ENCODE measurements at regions of chr20 and their contacts with region 1.

Region 1: GRCh38 chr20:1965520-1966351 is 28.1 kb downstream of the PDYN start:
- DNase-seq: peak; percentile 74
- ATAC-seq: peak; percentile 92
- H3K4me3 ChIP-seq: no peak overlapping the region
- H3K27ac ChIP-seq: no peak overlapping the region
- H3K4me1 ChIP-seq: no peaks in the 10 kb centered on the region; the same call in 1 of the 2 replicates
- H3K27me3 ChIP-seq: peaks cover 68% of the 10 kb centered on the region
- CTCF ChIP-seq: peak; percentile 99

Region 2: DNA sequence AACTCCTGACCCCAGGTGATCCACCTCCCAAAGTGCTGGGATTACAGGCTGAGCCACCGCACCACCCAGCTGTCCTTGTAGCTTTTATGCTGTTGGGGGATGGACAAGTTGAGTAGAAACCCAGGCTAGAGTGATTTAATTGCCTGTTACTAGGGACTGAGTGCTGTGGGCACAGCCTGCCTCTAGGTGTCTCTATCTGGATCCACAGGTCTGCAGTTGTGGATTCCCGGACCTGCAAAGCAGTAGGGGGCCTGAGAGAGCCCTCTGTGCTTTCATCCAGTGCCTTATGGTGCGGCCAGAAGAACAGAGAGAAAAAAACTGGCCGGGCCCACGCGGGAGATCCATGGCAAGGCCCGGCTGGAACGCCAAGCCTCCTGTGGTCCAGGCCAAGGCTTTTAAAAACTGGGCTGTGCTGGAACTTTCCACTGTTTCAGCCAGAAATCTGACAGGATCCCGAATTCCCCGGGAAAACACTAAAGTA is 65.4 kb before region 1 on chr20:
- CTCF ChIA-PET with region 1: no interaction called
- POLR2A ChIA-PET with region 1: no interaction called
- intact Hi-C with region 1: no loop called
- DNase-seq: peak; percentile 81
- ATAC-seq: peak; percentile 94
- H3K4me3 ChIP-seq: no peak overlapping the region
- H3K27ac ChIP-seq: no peak overlapping the region
- H3K4me1 ChIP-seq: peaks cover 7% of the 10 kb centered on the region; the same call in 1 of the 2 replicates
- H3K27me3 ChIP-seq: no peaks in the 10 kb centered on the region
- CTCF ChIP-seq: peak; percentile 84

Region 3: DNA sequence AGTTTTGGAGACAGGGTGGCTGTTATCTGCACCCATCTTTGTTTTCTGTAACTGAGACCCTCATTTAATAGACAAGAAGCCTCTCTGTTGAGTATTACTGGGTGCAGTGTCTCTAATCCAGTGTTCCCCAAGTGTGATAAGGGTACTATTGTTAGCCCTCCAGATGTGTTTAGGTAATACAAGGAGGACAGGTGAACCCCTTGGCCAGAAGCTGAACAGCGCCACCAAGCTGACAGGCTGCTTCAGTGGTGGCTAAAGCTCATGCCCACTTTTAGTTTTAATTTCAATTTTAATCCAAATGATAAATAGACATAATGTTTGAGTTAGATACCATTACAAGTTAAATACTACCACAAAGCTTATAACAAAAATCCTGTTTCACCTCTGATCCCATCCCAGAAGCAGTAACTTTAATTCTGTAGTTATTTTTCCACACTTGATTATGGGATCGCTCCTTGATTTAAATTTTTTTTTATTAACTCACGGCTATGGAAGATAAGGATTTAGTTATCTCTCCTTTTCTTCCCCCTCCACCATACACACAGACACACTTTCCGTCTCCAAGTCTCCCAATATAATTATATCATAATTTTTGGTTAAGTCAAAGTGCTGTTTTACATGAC is 127.5 kb after region 1 on chr20:
- CTCF ChIA-PET with region 1: interaction called, 3 read pairs
- POLR2A ChIA-PET with region 1: no interaction called
- intact Hi-C with region 1: loop called (anchors 5 kb)
- DNase-seq: peak; percentile 60
- ATAC-seq: peak; percentile 76
- H3K4me3 ChIP-seq: no peak overlapping the region; the same call in 1 of the 2 replicates
- H3K27ac ChIP-seq: no peak overlapping the region
- H3K4me1 ChIP-seq: no peaks in the 10 kb centered on the region
- H3K27me3 ChIP-seq: peaks cover 39% of the 10 kb centered on the region
- CTCF ChIP-seq: peak; percentile 95

Measured in PC-3 (cell line).